ENCODE measurements at regions of chr15 and their contacts with region 1.

Region 1: DNA sequence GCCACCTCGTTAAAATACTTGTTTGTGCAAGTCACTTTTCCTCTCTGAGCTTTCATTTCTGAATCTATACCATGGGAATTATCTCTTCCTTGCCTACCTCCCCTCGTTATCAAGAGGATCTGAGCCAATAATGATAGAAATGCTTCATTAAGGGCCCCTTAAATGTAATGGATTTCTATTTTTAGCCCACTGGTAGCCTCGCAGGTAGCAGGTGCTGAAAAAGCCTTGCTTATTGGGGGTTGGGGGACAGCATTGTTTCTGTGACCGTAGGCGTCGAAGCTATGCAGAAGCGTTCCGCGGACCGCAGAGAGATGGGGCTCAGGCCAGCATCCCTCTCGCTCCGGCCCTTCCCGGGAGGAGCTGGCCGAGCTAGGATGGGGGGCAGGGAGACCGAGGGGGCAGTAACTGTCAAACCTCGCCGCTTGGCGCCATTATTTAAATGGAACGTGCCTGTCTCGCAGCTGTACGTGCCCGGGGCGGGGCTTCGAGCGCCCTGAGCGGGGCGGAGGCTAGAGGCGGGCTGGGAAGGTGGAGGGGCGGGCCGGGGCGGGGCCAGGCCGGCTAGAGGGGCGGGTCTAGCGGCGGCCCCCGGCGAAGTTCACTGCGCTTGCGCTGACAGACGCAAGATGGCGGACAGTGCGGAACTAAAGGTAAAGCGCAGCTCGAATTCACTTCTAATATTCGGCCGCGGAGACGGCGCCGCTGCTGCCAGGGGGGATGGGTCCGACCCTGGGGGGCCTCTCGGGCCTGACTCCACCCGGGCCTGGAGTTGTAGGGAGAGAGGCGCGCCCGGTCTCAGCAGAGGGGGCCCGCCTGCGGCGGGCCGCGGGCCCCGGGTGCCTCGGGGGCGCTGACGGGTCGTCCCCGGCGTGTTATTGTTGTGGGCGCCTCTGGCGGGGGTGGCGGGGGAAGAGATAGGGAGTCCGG is at the start of gene PIAS1:
- DNase-seq: peak; percentile 98
- total RNA-seq, gene PIAS1: 29.4 TPM

Region 2: DNA sequence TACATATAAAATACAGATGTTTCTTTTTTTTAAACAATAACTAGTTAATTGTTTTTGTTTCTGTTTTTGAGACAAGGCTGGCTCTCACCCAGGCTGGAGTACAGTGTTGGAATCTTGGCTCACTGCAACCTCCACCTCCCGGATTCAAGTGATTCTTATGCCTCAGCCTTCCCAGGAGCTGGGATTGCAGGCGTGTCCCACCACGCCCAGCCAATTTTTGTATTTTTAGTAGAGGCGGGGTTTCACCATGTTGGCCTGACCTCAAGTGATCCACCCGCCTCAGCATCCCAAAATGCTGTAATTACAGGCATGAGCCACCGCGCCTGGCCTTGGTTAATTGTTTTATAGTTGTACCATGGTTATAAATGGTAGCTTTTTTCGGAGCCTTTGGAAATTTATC is 72.4 kb after region 1 on chr15:
- intact Hi-C with region 1: loop called (anchors 5 kb)
- DNase-seq: no peak

Region 3: DNA sequence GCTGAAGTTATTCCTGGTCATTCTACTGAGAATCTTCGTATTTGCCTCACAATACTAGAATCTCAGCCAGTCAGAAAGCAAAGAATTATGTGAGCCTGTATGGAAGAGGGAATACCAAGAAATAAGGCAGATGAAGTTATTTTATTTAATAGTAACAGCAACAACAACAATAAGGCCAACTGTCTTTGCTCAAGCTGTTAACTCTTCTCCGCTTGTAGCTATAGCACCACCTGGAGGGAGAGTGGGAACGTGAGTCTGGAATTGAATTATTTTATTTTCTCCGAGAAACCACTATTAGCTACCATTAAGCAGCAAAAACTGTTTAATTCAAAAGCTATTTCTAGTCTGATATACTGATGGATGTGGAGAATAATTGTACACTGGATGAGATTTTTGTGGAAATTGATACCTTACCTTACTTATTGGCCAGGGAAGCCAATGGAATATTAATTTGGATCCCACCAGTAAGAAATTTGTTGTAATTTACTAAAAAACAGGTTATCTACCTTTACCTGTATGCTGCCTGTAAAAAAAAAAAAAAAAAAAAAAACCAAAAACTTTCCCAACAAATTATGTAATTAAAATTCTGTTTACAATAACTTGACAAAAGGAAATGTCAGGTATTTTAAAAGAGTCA is 101.1 kb after region 1 on chr15:
- intact Hi-C with region 1: loop called (anchors 2 kb)
- DNase-seq: no peak

Measured in cardiac septum (tissue), 1 donor.